Head of caudate nucleus (tissue), 42 donors: ENCODE measurements at regions of chr10 and their contacts with region 1.

Region 1: GRCh38 chr10:27355918-27356573 is 115.4 kb upstream of the ACBD5 start:
- DNase-seq: no peak

Region 2: DNA sequence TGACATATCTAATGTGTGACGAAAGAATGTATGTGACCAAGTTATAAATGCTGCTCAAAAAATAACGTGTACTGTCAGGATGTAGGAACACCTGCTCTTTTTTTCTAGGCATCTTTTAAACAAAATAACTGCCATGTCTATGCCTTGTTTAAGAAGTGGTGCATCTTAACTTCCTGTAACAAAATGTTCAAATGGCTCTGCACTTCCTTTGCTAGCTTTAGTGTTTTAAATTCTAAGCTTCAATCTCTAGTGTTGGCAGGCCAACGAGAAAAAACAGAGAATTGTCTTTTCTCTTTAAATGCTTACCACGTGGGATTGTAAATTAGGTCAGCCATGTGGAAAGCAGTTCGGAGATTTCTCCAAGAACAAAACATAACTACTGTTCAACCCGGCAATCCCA is 673.1 kb before region 1 on chr10:
- intact Hi-C with region 1: no loop called
- DNase-seq: no peak

Region 3: DNA sequence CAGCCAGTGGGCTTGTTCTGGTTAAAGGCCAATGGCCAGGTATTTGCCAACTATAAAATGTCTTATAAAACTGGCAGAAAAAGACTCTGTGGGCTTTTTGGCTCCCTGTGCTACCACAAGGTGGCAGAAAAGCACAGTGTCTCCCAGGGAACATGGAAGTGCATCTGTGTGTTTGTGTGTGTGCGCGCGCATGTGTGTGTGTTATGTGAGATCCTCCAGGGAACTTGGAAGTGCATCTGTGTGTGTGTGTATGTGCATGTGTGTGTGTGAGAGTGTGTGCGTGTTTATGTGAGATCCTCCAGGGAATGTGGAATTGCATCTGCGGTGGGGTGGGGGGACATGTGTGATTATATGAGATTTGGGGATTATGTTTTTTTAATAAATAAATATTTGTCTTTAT is 465.1 kb before region 1 on chr10:
- intact Hi-C with region 1: loop called (anchors 5 kb)
- DNase-seq: peak in 31 of 42 donors; percentile 14 to 65 (median 38)

Region 4: GRCh38 chr10:27413387-27413786 is 57.3 kb after region 1 on chr10:
- intact Hi-C with region 1: no loop called
- DNase-seq: no peak

Region 5: DNA sequence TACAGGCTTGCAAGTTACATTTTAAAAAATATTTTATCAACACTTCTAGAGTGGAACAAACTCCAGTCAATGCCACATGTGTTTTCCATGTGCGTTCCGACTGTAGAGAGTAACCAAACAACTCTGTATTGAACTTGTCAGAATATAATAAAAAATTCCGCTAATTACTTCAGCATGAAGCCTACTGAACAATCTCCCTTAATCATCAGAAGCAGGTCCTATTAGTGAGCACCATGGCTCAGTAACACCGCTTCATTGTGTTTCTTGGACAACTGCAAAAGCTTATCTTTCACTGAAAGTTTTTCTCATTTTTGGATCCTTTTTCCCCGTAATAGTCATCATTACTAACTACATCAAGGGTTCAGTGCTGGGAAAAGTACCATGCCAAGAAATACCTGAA is 272.6 kb after region 1 on chr10:
- intact Hi-C with region 1: no loop called
- DNase-seq: no peak